ENCODE measurements at regions of chr17 and their contacts with region 1.

Region 1: GRCh38 chr17:63293323-63294075 is 152.6 kb downstream of the CYB561 start:
- DNase-seq: no peak
- ATAC-seq: peak; percentile 55
- H3K4me3 ChIP-seq: no peak overlapping the region
- H3K27ac ChIP-seq: peak overlapping the region; percentile 89 to 92
- H3K4me1 ChIP-seq: peaks cover 3 to 8% of the 10 kb centered on the region in 2 donors
- H3K27me3 ChIP-seq: no peaks in the 10 kb centered on the region

Region 2: GRCh38 chr17:63337579-63337978 is 44.1 kb after region 1 on chr17:
- intact Hi-C with region 1: loop called in 1 of 2 experiments (anchors 5 kb)
- DNase-seq: no peak
- ATAC-seq: no peak
- H3K4me3 ChIP-seq: no peak overlapping the region
- H3K27ac ChIP-seq: no peak overlapping the region
- H3K4me1 ChIP-seq: no peaks in the 10 kb centered on the region
- H3K27me3 ChIP-seq: no peaks in the 10 kb centered on the region

Region 3: GRCh38 chr17:63399856-63400255 is 106.4 kb after region 1 on chr17:
- intact Hi-C with region 1: loop called in 1 of 2 experiments (anchors 5 kb)
- DNase-seq: peak; percentile 49 to 70
- ATAC-seq: peak; percentile 57
- H3K4me3 ChIP-seq: no peak overlapping the region
- H3K27ac ChIP-seq: peak overlapping the region in 1 of 2 donors; percentile 14
- H3K4me1 ChIP-seq: peaks cover 0 to 9% of the 10 kb centered on the region in 2 donors
- H3K27me3 ChIP-seq: no peaks in the 10 kb centered on the region